ENCODE measurements at regions of chr1 and their contacts with region 1.

Region 1: DNA sequence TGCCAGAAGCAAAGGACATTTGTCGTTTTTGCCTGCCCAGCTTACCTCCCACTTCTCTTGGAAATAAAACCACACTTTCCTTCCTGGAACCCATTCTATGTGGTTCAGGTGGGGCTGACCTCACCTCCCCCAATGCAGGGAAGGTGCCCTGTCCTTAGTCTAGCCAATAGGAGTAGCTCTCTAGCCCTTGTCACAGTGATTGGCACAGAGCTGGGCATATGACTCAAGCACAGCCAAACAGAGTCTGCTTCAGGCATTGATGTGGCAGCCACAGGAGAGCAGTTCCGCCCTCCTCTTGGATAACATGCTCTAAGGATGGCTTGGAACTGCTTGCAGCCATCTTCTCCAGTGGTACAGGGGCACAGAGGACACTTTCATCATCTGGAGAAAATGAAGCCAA is 134.0 kb downstream of the LRIG2 start:
- DNase-seq: no peak
- ATAC-seq: no peak
- H3K4me3 ChIP-seq: no peak overlapping the region
- H3K27ac ChIP-seq: no peak overlapping the region
- H3K4me1 ChIP-seq: no peaks in the 10 kb centered on the region
- H3K27me3 ChIP-seq: no peaks in the 10 kb centered on the region
- CTCF ChIP-seq: no peak
- EP300 ChIP-seq: no peak
- POLR2A ChIP-seq: no peak
- RAD21 ChIP-seq: no peak

Region 2: GRCh38 chr1:113042285-113043143 is 164.5 kb before region 1 on chr1:
- CTCF ChIA-PET with region 1: no interaction called
- POLR2A ChIA-PET with region 1: no interaction called
- RAD21 ChIA-PET with region 1: no interaction called
- SMC1A ChIA-PET with region 1: no interaction called
- in situ Hi-C with region 1: no loop called
- intact Hi-C with region 1: no loop called
- DNase-seq: no peak
- ATAC-seq: peak; percentile 92
- H3K4me3 ChIP-seq: 0 out of 2 replicates have a peak overlapping the region, but pooled peaks have one; percentile 26
- H3K27ac ChIP-seq: peak overlapping the region; percentile 34; the same call in 1 of the 2 replicates
- H3K4me1 ChIP-seq: peaks cover 29% of the 10 kb centered on the region
- H3K27me3 ChIP-seq: no peaks in the 10 kb centered on the region
- CTCF ChIP-seq: peak; percentile 59 to 85 (median 66); a peak in 5 of 6 replicates
- EP300 ChIP-seq: no peak
- POLR2A ChIP-seq: no peak
- RAD21 ChIP-seq: peak; percentile 90

Region 3: GRCh38 chr1:113255720-113256347 is 48.8 kb after region 1 on chr1:
- CTCF ChIA-PET with region 1: no interaction called
- POLR2A ChIA-PET with region 1: no interaction called
- RAD21 ChIA-PET with region 1: no interaction called
- SMC1A ChIA-PET with region 1: no interaction called
- in situ Hi-C with region 1: no loop called
- intact Hi-C with region 1: loop called (anchors 5 kb)
- DNase-seq: no peak
- ATAC-seq: no peak
- H3K4me3 ChIP-seq: no peak overlapping the region
- H3K27ac ChIP-seq: no peak overlapping the region
- H3K4me1 ChIP-seq: no peaks in the 10 kb centered on the region
- H3K27me3 ChIP-seq: no peaks in the 10 kb centered on the region
- CTCF ChIP-seq: no peak
- EP300 ChIP-seq: no peak
- POLR2A ChIP-seq: no peak
- RAD21 ChIP-seq: no peak

Region 4: DNA sequence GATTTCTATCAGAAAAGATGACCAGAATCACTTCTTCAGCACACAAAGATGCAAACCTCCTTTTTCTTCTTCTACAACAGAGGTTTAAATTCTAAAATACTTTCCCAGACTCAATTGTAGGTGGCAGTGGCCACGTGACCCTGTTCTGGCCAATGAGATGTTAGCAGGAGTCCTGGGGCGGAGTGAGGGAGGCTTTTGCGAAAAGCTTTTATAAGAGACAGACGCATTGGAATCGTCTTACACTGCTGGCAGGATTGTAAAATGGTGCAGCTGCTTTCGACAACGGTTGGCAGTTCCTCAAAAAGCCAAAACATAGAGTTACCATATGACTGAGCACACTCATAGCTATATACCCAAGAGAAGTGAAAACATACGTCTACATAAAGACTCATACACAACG is 96.2 kb after region 1 on chr1:
- CTCF ChIA-PET with region 1: no interaction called
- POLR2A ChIA-PET with region 1: no interaction called
- RAD21 ChIA-PET with region 1: no interaction called
- SMC1A ChIA-PET with region 1: no interaction called
- in situ Hi-C with region 1: no loop called
- intact Hi-C with region 1: no loop called
- DNase-seq: no peak
- ATAC-seq: no peak
- H3K4me3 ChIP-seq: no peak overlapping the region
- H3K27ac ChIP-seq: no peak overlapping the region
- H3K4me1 ChIP-seq: no peaks in the 10 kb centered on the region
- H3K27me3 ChIP-seq: peaks cover 1 to 6% of the 10 kb centered on the region in 2 experiments; a peak in 1 of 4 replicates
- CTCF ChIP-seq: no peak
- EP300 ChIP-seq: no peak
- POLR2A ChIP-seq: no peak
- RAD21 ChIP-seq: no peak

Region 5: DNA sequence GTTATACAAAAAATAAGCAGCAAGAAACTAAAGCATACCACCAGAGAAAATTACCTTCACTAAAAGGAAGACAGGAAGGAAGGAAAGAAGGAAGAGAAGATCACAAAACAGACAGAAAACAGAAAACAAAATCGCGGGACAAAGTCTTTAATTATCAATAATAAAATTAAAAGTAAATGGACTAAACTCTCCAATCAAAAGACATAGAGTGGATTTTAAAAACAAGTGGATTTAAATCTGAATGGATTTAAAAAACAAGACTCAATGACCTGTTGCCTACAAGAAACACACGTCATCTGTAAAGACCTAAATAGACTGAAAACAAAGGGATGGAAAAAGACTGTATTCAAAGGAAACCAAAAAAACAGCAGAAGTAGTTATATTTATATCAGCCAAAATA is 107.6 kb after region 1 on chr1:
- CTCF ChIA-PET with region 1: no interaction called
- POLR2A ChIA-PET with region 1: no interaction called
- RAD21 ChIA-PET with region 1: no interaction called
- SMC1A ChIA-PET with region 1: no interaction called
- in situ Hi-C with region 1: no loop called
- intact Hi-C with region 1: no loop called
- DNase-seq: no peak
- ATAC-seq: no peak
- H3K4me3 ChIP-seq: no peak overlapping the region
- H3K27ac ChIP-seq: no peak overlapping the region
- H3K4me1 ChIP-seq: no peaks in the 10 kb centered on the region
- H3K27me3 ChIP-seq: no peaks in the 10 kb centered on the region
- CTCF ChIP-seq: no peak
- EP300 ChIP-seq: no peak
- POLR2A ChIP-seq: no peak
- RAD21 ChIP-seq: no peak

Measured in GM12878 (cell line).